ENCODE measurements at regions of chr19 and their contacts with region 1.

Region 1: DNA sequence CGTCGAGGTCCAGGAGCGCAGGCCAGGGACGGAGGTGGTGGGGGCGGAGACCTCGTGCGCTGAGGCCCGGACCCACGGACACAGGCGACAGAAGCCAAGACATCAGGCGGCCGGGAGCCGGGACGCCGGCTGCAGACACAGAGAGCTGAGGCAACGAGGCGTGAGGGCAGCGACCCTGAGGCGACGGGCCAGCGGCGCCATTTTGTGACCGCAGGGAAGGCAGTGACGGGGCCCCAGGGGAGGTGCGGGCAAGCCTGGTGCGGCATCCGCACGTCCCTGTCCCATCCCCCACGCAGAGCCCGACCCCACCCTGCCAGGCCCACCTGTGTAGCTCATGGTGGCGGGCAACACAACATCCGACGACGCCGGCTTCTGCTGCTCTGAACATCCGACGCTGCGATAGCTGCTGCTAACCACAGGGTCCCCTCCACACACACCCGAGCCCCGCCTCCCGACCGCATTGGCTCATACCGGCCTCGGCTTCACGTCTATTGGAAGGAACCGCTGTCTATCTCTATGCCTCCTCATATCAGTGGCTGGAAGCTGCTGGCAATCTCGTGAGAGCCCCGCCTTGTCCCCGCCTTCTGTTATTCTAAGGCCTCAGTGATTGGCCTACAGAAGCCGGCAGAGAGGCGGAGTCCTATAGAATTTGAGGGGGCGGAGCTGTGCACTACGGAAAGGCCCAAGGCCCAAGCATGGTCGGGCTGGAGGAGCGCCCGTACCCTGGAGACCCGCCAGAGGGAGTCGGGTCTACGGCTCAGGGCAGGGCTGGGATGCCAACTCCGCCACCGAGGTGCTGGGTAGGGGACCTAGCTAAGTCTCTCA is at the start of gene AKAP8L:
- DNase-seq: peak; percentile 99
- H3K4me3 Mint-ChIP-seq: peak within 1 kb of the TSS; percentile 100
- H3K27ac Mint-ChIP-seq: peak within 1 kb of the TSS; percentile 97
- H3K4me1 Mint-ChIP-seq: peaks cover 39% of the 10 kb centered on the region
- H3K27me3 Mint-ChIP-seq: no peaks in the 10 kb centered on the region
- total RNA-seq, gene AKAP8L: 94.2 to 100 TPM

Region 2: DNA sequence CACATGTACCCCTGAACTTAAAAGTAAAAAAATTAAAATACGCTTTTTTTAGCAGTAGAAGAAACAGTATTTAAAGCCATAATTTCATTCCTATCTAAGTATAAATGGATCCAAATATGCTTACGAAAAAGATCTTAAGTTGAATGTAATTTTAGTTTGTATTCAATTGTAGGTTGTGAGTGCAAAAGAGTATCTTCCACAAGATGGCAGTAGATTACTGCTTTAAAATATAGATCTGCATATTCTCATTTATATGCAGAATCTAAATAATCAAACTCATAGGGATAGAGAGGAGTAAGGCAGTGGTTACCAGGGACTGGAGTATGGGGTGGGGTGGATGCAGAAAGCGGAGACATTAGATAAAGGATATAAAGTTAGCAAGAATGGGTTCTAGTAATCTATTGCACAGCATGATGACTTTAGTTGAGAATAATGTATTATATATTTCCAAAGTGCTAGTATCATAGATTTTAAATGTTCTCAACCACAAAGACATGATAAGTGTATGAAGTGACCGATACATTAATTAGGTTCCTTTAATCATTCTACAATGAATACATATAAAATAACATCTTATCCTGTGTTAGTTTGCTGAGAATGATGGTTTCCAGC is 547.1 kb before region 1 on chr19:
- CTCF ChIA-PET with region 1: no interaction called
- POLR2A ChIA-PET with region 1: no interaction called
- intact Hi-C with region 1: no loop called
- DNase-seq: no peak
- H3K4me3 Mint-ChIP-seq: no peak overlapping the region
- H3K27ac Mint-ChIP-seq: no peak overlapping the region
- H3K4me1 Mint-ChIP-seq: no peaks in the 10 kb centered on the region
- H3K27me3 Mint-ChIP-seq: peaks cover 48% of the 10 kb centered on the region

Region 3: DNA sequence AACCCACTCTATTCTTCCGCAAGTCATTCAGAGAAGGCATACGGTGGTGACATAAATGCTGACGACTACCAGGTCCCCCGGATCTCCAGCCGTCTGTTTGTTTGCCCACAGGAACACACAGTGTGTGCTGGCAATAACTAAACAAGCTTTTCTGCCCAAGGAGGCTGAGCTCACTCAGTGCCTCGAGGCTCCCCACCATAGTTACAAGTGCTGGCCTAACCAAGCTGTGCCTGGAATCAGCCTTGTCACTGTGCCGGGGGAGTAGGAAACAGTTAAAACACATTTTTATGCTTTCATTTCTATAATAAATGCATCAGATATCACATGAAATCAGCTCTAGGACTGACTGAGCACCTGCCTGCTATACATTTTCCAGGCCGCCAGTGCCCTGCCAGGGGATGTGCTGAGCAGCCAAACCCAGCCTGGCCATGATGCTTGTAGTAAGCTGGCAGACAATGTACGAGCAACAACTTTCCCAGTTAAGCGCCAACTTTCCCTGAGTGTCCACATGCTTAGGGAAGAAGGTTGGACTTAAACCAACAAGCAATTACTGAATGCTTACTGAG is 114.6 kb before region 1 on chr19:
- CTCF ChIA-PET with region 1: no interaction called
- POLR2A ChIA-PET with region 1: no interaction called
- intact Hi-C with region 1: loop called (anchors 5 kb)
- DNase-seq: peak; percentile 82
- H3K4me3 Mint-ChIP-seq: peak overlapping the region; percentile 23
- H3K27ac Mint-ChIP-seq: peak overlapping the region; percentile 86
- H3K4me1 Mint-ChIP-seq: peaks cover 84% of the 10 kb centered on the region
- H3K27me3 Mint-ChIP-seq: no peaks in the 10 kb centered on the region

Region 4: GRCh38 chr19:15404097-15404779 is 14.6 kb before region 1 on chr19:
- CTCF ChIA-PET with region 1: interaction called, 9 read pairs
- POLR2A ChIA-PET with region 1: interaction called, 16 read pairs
- intact Hi-C with region 1: no loop called
- DNase-seq: no peak
- H3K4me3 Mint-ChIP-seq: no peak overlapping the region
- H3K27ac Mint-ChIP-seq: no peak overlapping the region
- H3K4me1 Mint-ChIP-seq: peaks cover 30% of the 10 kb centered on the region
- H3K27me3 Mint-ChIP-seq: no peaks in the 10 kb centered on the region

Region 5: GRCh38 chr19:15449620-15450527 is 31.1 kb after region 1 on chr19 and contains the start of gene WIZ:
- CTCF ChIA-PET with region 1: interaction called, 11 read pairs
- POLR2A ChIA-PET with region 1: interaction called, 4 read pairs
- intact Hi-C with region 1: no loop called
- DNase-seq: peak; percentile 88
- H3K4me3 Mint-ChIP-seq: peak within 1 kb of the TSS; percentile 62
- H3K27ac Mint-ChIP-seq: peak within 1 kb of the TSS; percentile 81
- H3K4me1 Mint-ChIP-seq: peaks cover 14% of the 10 kb centered on the region
- H3K27me3 Mint-ChIP-seq: no peaks in the 10 kb centered on the region
- total RNA-seq, gene WIZ: 18.2 to 21.4 TPM

Region 6: GRCh38 chr19:15466851-15467733 is 48.3 kb after region 1 on chr19:
- CTCF ChIA-PET with region 1: interaction called, 19 read pairs
- POLR2A ChIA-PET with region 1: interaction called, 21 read pairs
- intact Hi-C with region 1: loop called (anchors 1 kb)
- DNase-seq: peak; percentile 84
- H3K4me3 Mint-ChIP-seq: peak overlapping the region; percentile 41
- H3K27ac Mint-ChIP-seq: peak overlapping the region; percentile 93
- H3K4me1 Mint-ChIP-seq: peaks cover 52% of the 10 kb centered on the region
- H3K27me3 Mint-ChIP-seq: no peaks in the 10 kb centered on the region

Region 7: GRCh38 chr19:15498911-15499317 is 80.1 kb after region 1 on chr19:
- CTCF ChIA-PET with region 1: no interaction called
- POLR2A ChIA-PET with region 1: no interaction called
- intact Hi-C with region 1: no loop called
- DNase-seq: peak; percentile 22
- H3K4me3 Mint-ChIP-seq: no peak overlapping the region
- H3K27ac Mint-ChIP-seq: no peak overlapping the region
- H3K4me1 Mint-ChIP-seq: peaks cover 7% of the 10 kb centered on the region
- H3K27me3 Mint-ChIP-seq: no peaks in the 10 kb centered on the region

Region 8: DNA sequence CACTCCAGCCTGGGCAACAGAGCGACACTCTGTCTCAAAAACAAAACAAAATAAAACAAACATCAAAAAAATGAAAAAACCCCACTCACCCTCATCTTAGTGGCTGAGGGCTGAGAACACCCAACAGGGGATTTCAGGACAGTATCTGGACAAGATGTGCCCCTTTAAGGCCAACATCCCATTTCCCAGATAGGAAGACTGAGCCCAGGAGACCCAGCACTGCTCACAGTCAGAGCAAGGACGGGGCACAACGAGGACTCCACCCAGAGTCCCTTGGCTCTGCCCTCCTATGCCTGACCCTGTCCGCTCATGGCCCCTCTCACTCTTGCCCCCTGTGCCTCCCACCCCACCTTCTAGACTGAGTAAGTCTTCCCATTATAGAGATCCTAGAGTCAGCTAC is 143.3 kb after region 1 on chr19:
- CTCF ChIA-PET with region 1: interaction called, 225 read pairs
- POLR2A ChIA-PET with region 1: no interaction called
- intact Hi-C with region 1: no loop called
- DNase-seq: no peak
- H3K4me3 Mint-ChIP-seq: no peak overlapping the region
- H3K27ac Mint-ChIP-seq: no peak overlapping the region
- H3K4me1 Mint-ChIP-seq: no peaks in the 10 kb centered on the region
- H3K27me3 Mint-ChIP-seq: peaks cover 16% of the 10 kb centered on the region

Measured in activated CD4-positive, alpha-beta memory T cell treated with anti-CD3 and anti-CD28 coated beads for 36 hours (primary cell).